AG04449 (cell line): ENCODE measurements at regions of chr20 and their contacts with region 1.

Region 1: DNA sequence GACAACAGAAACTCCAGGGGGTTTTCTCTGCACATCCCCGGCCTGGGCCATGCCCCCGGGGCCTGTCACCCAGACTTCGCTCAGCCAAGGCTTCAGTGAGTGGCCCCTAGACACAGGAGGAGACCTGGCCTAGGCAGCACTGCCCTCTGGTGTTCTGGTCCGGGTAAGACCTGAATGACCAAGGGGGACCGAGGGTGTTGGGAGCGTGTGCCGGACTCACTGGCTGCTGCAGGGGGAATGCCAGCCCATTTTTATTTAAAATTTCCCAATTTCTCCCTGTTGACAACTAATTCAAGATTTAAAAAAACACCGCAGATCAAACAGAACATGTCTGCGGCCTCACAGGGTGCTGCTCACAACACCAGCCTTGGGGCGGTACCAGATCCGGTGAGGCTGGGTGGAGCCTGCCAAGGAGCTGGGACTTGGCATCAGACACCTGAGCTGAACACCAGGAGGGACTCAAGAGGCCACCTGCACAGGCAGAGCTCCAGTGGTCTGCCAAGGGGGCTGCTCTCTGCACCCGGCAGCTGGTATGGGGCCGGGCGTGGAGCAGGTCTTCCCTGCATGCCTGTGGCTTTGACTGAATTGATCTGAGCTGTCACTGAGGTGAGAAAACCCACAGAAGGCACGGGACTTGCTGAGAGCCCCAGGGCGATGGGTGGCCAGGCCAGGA is 47.8 kb downstream of the DSTN start:
- DNase-seq: no peak
- H3K4me3 ChIP-seq: no peak overlapping the region
- CTCF ChIP-seq: peak; percentile 66

Region 2: GRCh38 chr20:17491041-17491440 is 126.6 kb before region 1 on chr20:
- CTCF ChIA-PET with region 1: no interaction called
- POLR2A ChIA-PET with region 1: no interaction called
- DNase-seq: no peak
- H3K4me3 ChIP-seq: no peak overlapping the region
- CTCF ChIP-seq: no peak

Region 3: DNA sequence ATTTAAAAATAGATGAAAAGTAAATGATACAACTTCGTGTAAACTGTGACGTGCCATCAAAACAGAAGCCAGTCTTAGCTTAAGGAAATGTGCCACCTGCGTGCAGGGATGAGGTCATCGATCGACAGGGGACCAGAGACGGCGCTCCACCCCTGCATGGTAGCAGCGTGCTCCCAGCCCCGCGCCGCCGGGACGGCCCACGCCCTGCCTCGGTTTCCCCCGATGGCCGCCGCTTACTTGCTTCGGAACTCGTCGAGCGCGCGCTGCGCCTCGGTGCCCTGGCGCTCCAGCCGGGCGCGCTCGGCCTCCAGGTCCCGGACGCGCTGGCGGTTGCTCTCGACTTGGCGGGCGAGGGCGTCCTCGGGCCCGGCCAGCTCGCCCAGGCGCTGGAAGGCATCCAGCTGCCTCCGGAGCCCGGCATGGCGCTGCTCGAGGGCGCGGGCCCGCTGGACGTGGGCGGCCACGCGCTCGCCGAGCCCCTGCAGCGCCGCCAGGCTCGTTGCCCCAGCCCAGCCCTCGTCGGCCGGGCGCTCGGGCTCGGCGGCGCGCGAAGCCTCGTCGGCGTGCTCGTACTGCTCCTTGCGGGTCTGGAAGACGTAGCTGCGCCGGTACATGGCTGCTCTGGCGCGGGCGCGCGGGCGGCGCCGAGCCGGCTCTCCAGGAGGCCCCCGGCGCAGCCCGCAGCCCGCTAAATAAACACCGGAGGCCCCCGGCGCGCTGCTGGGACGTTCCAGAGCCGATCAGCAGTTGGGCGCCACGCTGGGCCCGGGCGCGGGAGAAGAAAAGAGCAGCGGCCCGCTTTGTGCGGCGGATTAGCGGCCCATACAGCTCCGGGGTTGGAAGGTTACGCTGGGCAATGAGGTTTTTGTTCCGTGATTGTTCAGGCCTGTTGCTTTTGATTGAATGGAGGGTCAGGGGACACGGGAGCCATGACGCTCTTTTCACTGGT is 86.7 kb before region 1 on chr20 and contains the start of gene BFSP1:
- CTCF ChIA-PET with region 1: interaction called, 11 read pairs
- POLR2A ChIA-PET with region 1: no interaction called
- DNase-seq: no peak
- H3K4me3 ChIP-seq: peak within 1 kb of the TSS; percentile 60
- CTCF ChIP-seq: no peak

Region 4: GRCh38 chr20:17562804-17563305 is 54.8 kb before region 1 on chr20:
- CTCF ChIA-PET with region 1: no interaction called
- POLR2A ChIA-PET with region 1: no interaction called
- DNase-seq: peak; percentile 93
- H3K4me3 ChIP-seq: no peak overlapping the region
- CTCF ChIP-seq: no peak

Region 5: GRCh38 chr20:17873410-17874270 is 256.0 kb after region 1 on chr20:
- CTCF ChIA-PET with region 1: no interaction called
- POLR2A ChIA-PET with region 1: no interaction called
- DNase-seq: peak; percentile 81
- H3K4me3 ChIP-seq: peak overlapping the region; percentile 18; the same call in 1 of the 2 replicates
- CTCF ChIP-seq: no peak